A549 (cell line): ENCODE measurements at regions of chr19 and their contacts with region 1.

Region 1: GRCh38 chr19:38229585-38230073 is 5.6 kb upstream of the DPF1 start:
- DNase-seq: peak; percentile 89 to 93
- ATAC-seq: peak; percentile 49 to 79
- H3K4me3 ChIP-seq: peak overlapping the region; percentile 52
- H3K27ac ChIP-seq: peak overlapping the region in 1 of 2 experiments; percentile 67; a peak in 3 of 6 replicates
- H3K4me1 ChIP-seq: peaks cover 25% of the 10 kb centered on the region
- CTCF ChIP-seq: no peak
- EP300 ChIP-seq: no peak
- POLR2A ChIP-seq: no peak
- RAD21 ChIP-seq: no peak

Region 2: GRCh38 chr19:38044267-38045111 is 185.1 kb before region 1 on chr19:
- CTCF ChIA-PET with region 1: no interaction called
- POLR2A ChIA-PET with region 1: no interaction called
- DNase-seq: peak in 1 of 2 experiments; percentile 42
- ATAC-seq: peak in 1 of 2 experiments; percentile 27; a peak in 2 of 6 replicates
- H3K4me3 ChIP-seq: no peak overlapping the region
- H3K27ac ChIP-seq: 0 out of 6 replicates have a peak overlapping the region, but pooled peaks of 1 of the 2 experiments have one; percentile 5
- H3K4me1 ChIP-seq: no peaks in the 10 kb centered on the region
- CTCF ChIP-seq: peak; percentile 28; the same call in 2 of the 3 replicates
- EP300 ChIP-seq: no peak
- POLR2A ChIP-seq: no peak
- RAD21 ChIP-seq: peak in 1 of 2 experiments; percentile 53; a peak in 3 of 5 replicates

Region 3: DNA sequence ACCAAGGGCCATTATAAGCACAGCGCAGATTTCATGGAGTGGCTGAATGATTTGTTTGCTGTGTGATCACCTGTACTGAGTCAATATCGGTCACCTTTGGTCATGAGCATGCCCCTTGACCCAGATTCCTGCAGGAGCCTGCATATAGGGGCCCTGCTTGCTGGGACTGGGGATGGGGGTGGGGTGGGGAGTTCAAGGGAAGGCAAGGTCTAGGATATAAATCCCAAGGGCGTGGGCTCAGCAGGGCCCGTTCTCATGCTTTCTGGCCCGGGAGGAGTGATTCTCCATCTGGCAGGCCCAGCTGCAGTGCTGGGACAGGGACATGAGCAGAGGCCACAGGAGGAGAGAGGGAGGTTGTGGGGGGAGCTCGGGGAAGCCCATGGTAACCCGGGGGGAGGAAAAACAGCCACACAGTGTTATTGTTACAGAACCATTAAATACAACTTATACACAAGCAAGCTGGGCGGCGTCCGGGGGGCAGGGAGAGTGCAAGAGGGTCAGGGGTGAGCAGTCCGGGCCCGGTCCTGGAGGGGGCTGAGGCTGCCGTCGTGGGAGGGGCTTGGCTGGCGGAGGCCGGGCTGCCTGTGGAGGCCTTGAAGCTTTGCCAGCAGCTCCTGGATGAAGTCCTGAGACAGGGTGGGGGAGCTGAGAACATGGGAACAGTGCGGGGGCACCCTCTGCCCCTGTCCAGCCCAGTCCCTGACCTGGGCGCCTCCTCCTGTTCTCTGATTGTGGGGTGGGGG is 21.4 kb after region 1 on chr19:
- CTCF ChIA-PET with region 1: interaction called, 613 read pairs
- POLR2A ChIA-PET with region 1: no interaction called
- DNase-seq: no peak
- ATAC-seq: no peak
- H3K4me3 ChIP-seq: no peak overlapping the region
- H3K27ac ChIP-seq: peak overlapping the region in 1 of 2 experiments; percentile 39; a peak in 3 of 6 replicates
- H3K4me1 ChIP-seq: peaks cover 34% of the 10 kb centered on the region
- CTCF ChIP-seq: no peak
- EP300 ChIP-seq: no peak
- POLR2A ChIP-seq: no peak
- RAD21 ChIP-seq: no peak

Region 4: GRCh38 chr19:38290631-38291157 is 61.1 kb after region 1 on chr19:
- CTCF ChIA-PET with region 1: interaction called, 11 read pairs
- POLR2A ChIA-PET with region 1: no interaction called
- DNase-seq: peak in 1 of 2 experiments; percentile 61
- ATAC-seq: peak; percentile 42 to 58
- H3K4me3 ChIP-seq: no peak overlapping the region
- H3K27ac ChIP-seq: peak overlapping the region; percentile 9 to 62; a peak in 3 of 6 replicates
- H3K4me1 ChIP-seq: peaks cover 16% of the 10 kb centered on the region
- CTCF ChIP-seq: no peak
- EP300 ChIP-seq: no peak
- POLR2A ChIP-seq: no peak
- RAD21 ChIP-seq: no peak

Region 5: DNA sequence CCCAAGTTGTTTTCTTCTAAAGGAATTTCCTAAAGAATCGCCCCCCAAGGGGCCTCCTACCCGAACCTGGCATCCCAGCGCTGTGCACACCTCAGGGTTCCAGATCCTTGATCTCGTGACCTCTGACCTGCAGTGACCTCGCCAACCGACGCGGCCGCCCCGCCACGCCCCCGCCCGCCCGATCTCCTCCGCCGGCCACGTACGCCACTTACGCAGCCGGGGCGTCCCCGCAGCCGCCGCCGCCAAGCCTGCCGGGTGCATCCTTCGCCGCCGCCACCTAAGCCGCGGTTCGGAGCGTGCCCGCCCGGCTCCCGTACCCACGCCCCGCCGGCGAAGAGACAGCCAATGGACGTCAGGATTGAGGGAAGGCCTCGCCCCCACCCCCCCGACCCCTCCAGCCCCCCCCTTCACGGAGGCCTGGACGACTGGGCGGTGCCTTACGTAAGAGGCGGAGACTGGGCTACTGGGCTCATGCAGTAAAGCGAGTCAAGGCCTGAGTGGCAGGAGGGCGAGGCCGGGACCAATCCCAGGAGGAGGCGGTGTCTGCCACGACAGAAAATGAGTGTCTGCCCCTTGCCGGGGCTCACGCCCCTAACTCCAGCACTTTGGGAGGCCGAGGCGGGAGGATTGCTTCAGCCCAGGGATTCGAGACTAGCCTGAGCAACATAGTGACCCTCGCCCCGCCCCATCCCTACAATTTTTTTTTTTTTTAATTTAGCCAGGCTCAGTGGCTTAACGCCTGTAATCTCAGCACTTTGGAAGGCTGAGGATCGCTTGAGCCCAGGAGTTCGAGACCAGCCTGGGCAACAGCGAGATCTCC is 86.2 kb after region 1 on chr19 and contains the start of gene YIF1B:
- CTCF ChIA-PET with region 1: interaction called, 1,052 read pairs
- POLR2A ChIA-PET with region 1: no interaction called
- DNase-seq: peak; percentile 100
- ATAC-seq: peak; percentile 87 to 93
- H3K4me3 ChIP-seq: peak within 1 kb of the TSS; percentile 62
- H3K27ac ChIP-seq: peak within 1 kb of the TSS; percentile 76 to 85
- H3K4me1 ChIP-seq: peaks cover 10% of the 10 kb centered on the region; the same call in 2 of the 3 replicates
- CTCF ChIP-seq: no peak
- EP300 ChIP-seq: no peak
- POLR2A ChIP-seq: peak; percentile 63
- RAD21 ChIP-seq: no peak; a peak in 2 of 5 replicates
- polyA plus RNA-seq, gene YIF1B: 75.5 and 88.1 TPM in 2 replicates

Region 6: DNA sequence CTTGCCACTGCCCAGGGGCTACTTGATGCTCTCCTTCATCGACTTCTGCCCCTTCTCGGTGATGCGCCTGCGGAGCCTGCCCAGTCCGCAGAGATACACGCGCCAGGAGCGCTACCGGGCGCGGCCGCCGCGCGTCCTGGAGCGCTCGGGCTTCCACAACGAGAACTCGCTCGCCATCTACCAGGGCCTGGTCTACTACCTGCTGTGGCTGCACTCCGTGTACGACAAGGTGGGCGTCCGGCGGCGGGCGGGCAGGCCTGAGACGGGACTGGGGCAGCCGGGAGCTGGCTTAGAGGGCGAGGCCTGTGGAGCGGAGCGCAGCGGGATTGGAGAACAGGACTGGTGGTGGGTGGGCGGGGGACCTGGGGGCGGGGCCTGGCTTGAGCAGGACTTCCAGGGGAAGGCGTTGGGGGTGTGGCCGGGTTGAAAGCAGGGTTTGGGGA is 132.0 kb after region 1 on chr19:
- CTCF ChIA-PET with region 1: interaction called, 16 read pairs
- POLR2A ChIA-PET with region 1: no interaction called
- DNase-seq: peak; percentile 96 to 99
- ATAC-seq: peak; percentile 81 to 93
- H3K4me3 ChIP-seq: peak overlapping the region; percentile 65
- H3K27ac ChIP-seq: peak overlapping the region; percentile 62 to 81
- H3K4me1 ChIP-seq: peaks cover 9% of the 10 kb centered on the region; the same call in 1 of the 3 replicates
- CTCF ChIP-seq: no peak
- EP300 ChIP-seq: no peak
- POLR2A ChIP-seq: no peak
- RAD21 ChIP-seq: no peak

Region 7: DNA sequence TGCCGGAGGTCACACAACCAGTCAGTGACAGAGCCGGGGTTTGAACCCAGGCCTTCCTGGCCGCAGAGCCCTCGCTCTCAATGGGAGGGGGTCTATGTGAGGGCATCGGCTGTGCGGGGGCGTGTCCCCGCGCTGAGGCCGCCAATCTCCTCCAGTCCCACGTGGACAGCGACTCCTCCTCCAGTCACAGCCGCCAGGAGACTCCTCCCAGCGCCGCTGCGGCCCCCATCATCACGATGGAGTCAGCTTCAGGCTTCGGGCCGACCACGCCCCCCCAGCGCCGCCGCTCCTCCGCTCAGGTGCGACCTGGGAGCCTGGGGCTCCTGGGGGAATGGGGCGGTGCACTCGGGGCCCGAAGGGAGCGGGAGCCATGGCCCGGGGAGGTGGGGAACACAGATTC is 164.9 kb after region 1 on chr19:
- CTCF ChIA-PET with region 1: interaction called, 10 read pairs
- POLR2A ChIA-PET with region 1: no interaction called
- DNase-seq: no peak
- ATAC-seq: no peak
- H3K4me3 ChIP-seq: no peak overlapping the region
- H3K27ac ChIP-seq: no peak overlapping the region
- H3K4me1 ChIP-seq: peaks cover 28% of the 10 kb centered on the region
- CTCF ChIP-seq: no peak
- EP300 ChIP-seq: no peak
- POLR2A ChIP-seq: no peak
- RAD21 ChIP-seq: no peak

Region 8: DNA sequence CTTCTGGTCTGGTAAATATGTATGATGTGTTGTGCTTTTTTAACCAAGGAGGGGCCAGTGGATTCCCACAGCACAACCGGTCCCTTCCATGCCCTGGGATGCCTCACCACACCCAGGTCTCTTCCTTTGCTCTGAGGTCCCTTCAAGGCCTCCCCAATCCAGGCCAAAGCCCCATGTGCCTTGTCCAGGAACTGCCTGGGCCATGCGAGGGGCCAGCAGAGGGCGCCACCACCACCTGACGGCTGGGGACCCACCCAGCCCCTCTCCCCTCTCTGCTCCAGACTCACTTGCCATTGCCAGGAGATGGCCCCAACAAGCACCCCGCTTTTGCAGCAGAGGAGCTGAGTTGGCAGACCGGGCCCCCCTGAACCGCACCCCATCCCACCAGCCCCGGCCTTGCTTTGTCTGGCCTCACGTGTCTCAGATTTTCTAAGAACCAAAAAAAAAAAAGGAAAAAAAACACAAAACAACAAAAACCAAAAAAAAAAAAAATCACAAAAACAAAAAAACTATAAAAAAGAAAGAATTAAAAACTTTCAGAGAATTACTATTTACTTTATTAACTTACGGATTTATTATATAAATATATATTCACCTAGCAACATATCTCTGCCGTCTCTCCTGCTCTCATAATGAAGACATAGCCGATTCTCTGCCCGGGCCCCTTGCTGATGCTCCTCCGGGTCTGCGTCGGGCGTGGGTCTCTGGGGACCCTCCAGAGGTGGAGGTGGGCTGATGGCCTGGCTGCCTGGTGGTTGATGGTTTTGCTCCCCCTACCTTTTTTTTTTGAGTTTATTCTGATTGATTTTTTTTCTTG is 500.2 kb after region 1 on chr19:
- CTCF ChIA-PET with region 1: no interaction called
- POLR2A ChIA-PET with region 1: no interaction called
- DNase-seq: peak; percentile 89 to 90
- ATAC-seq: peak; percentile 15 to 71; a peak in 5 of 6 replicates
- H3K4me3 ChIP-seq: no peak overlapping the region
- H3K27ac ChIP-seq: peak overlapping the region; percentile 53 to 84; a peak in 5 of 6 replicates
- H3K4me1 ChIP-seq: peaks cover 84% of the 10 kb centered on the region
- CTCF ChIP-seq: peak; percentile 98
- EP300 ChIP-seq: no peak
- POLR2A ChIP-seq: no peak
- RAD21 ChIP-seq: peak; percentile 81 to 87